ENCODE measurements at regions of chr6 and their contacts with region 1.

Region 1: GRCh38 chr6:155275808-155276480 is 12.1 kb downstream of the CLDN20 start:
- DNase-seq: no peak
- H3K4me3 Mint-ChIP-seq: no peak overlapping the region
- H3K27ac Mint-ChIP-seq: no peak overlapping the region
- H3K4me1 Mint-ChIP-seq: peaks cover 7% of the 10 kb centered on the region
- H3K27me3 Mint-ChIP-seq: no peaks in the 10 kb centered on the region
- CTCF ChIP-seq: no peak

Region 2: DNA sequence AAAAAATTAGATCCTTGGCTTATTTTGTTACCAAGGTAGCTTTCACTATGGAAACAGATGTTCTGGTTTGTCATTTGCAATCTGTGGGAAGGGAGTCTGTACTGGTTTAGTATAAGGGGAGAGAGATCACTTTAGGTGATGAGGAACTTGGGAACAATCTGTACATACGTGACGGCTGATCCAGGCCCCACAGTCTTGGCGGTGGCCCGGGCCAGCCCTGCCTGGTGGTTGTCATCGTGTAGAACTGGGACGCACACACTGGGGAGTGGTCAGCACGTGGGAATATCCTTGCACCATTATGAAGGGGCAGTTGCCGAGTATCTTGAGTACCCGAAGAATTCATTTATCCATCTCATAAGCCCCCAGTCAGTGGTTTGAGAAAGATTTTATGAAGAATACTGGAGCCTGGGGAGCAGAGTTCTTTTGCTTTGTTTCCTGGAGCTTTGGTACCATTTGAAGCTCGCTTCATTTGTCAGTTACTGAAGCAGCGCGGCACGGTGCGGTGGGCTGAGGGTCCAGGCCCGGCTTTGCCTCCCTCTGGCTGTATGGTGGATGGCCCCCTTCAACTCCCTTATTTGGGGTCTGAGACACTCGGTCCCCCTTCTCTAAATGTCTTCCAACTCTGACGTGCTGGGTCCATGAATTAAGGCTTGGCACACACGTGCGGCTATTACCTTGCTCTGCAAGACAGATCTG is 34.9 kb before region 1 on chr6:
- CTCF ChIA-PET with region 1: no interaction called
- POLR2A ChIA-PET with region 1: no interaction called
- intact Hi-C with region 1: no loop called
- DNase-seq: no peak
- H3K4me3 Mint-ChIP-seq: no peak overlapping the region
- H3K27ac Mint-ChIP-seq: no peak overlapping the region
- H3K4me1 Mint-ChIP-seq: no peaks in the 10 kb centered on the region
- H3K27me3 Mint-ChIP-seq: no peaks in the 10 kb centered on the region
- CTCF ChIP-seq: no peak

Region 3: DNA sequence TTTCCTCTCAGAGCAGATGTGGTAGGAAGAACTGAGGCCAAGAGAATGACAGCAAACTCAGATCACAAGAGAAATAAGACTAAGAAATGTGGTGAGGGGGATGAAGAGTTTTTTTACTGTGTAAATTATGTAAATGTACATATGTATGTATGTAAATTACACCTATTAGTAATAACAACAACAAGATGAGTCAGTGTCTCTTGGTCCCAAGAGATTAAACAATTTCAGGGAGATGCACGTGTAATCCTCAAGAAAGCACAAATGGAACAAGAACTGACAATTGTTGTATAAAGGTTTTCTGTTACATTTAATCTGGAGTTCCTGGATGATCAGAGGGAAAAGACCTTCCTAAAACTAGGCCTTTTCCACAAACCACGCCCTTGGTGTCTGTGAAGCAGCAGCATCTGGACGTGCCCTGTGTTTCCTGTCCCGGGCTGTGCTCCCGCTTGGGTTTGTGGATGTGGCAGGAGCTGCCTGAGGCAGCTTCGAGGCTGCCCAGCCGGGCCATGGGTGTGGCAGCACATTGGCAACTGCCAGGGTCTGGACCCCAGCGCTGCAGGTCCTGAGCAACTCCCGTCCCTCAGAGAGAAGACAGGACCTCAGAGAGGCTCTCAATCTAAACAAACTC is 11.1 kb before region 1 on chr6:
- CTCF ChIA-PET with region 1: interaction called, 10 read pairs
- POLR2A ChIA-PET with region 1: interaction called, 3 read pairs
- intact Hi-C with region 1: no loop called
- DNase-seq: peak; percentile 52
- H3K4me3 Mint-ChIP-seq: no peak overlapping the region
- H3K27ac Mint-ChIP-seq: peak overlapping the region; percentile 75
- H3K4me1 Mint-ChIP-seq: peaks cover 12% of the 10 kb centered on the region
- H3K27me3 Mint-ChIP-seq: no peaks in the 10 kb centered on the region
- CTCF ChIP-seq: no peak

Region 4: GRCh38 chr6:155287762-155288161 is 11.8 kb after region 1 on chr6:
- CTCF ChIA-PET with region 1: interaction called, 3 read pairs
- POLR2A ChIA-PET with region 1: interaction called, 12 read pairs
- intact Hi-C with region 1: no loop called
- DNase-seq: no peak
- H3K4me3 Mint-ChIP-seq: no peak overlapping the region
- H3K27ac Mint-ChIP-seq: no peak overlapping the region
- H3K4me1 Mint-ChIP-seq: no peaks in the 10 kb centered on the region
- H3K27me3 Mint-ChIP-seq: no peaks in the 10 kb centered on the region
- CTCF ChIP-seq: no peak

Region 5: DNA sequence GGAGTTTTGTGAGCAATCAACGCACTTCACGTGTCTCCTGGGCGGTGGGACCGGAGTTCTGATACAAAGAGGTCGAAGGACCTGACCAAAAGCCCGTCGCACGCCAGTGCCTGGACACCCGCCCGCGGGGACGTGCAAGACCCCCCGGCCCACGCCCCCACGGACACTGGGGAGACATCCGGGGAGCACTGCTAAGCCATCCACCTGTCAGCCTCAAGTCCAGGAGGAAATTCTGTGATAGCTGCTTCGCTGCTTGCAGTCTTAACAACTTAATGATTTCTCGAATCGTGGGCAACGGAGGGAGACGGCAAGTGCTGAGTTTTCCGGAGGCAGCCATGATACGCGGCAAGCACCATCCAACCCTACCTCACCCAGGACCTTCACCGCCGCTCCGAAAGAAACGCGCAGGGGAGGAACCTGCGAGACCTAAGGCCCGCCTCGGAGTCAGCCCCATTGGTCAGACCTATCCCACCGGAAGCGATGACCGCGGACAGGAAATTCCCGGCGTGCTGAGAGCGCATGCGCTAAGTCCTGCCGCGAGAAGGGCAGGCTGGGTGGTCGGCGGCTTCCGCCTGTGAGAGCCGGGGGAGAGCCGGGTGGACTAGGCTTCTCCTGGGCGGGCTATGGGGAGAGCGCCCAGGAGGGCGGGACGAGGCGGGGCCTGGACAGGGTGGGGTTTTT is 38.3 kb after region 1 on chr6 and contains the start of gene TFB1M:
- CTCF ChIA-PET with region 1: interaction called, 4 read pairs
- POLR2A ChIA-PET with region 1: interaction called, 13 read pairs
- intact Hi-C with region 1: no loop called
- DNase-seq: peak; percentile 98
- H3K4me3 Mint-ChIP-seq: peak within 1 kb of the TSS; percentile 79
- H3K27ac Mint-ChIP-seq: peak within 1 kb of the TSS; percentile 97
- H3K4me1 Mint-ChIP-seq: peaks cover 8% of the 10 kb centered on the region
- H3K27me3 Mint-ChIP-seq: no peaks in the 10 kb centered on the region
- CTCF ChIP-seq: no peak
- total RNA-seq, gene TFB1M: 26.8 and 31.0 TPM in 2 replicates